ENCODE measurements at regions of chr16 and their contacts with region 1.

Region 1: DNA sequence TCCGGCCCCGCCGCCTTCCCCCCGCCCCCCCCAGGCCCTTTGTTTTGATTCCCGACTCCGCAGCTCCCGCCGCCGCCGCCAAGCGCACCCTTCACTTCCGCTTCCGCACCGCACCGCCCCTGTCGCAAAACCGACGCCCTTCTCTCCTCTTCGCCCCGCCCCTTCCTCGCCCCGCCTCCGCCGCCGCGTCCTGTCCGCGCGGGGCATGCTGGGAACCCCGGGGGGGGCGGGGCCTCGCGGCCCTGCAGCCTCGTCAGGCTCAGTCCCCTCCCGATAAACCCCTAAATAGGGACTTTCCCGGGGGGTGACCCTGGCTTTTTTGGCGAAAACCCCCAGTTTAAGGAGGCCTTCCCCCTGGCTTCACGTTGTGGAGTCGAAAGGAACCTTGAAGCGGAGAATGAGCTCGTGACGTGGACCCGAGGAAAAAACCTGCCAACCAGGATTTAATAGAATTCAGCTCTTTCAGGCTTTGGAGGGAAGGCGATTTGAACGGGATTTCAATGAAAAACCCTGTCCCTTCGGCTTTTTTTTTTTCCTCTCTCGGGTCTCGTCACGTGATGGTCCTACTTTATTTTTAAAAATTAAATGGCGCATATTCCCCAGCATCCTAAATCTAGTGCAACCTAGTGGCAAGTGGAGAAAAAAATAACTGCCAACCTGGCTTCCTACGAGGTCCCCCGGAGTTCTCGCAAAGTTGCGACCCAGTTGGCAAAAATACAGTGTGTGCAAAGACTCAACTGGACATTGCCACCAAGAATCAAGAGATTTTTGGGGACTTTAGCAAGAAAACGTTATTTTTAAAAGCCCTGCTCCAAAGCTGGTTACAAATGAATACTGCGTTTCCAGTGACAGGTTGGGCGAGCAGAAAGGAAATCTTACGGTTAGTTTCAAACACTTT is at the start of gene MARF1:
- DNase-seq: peak; percentile 98 to 100 (median 99)
- ATAC-seq: peak; percentile 96
- H3K4me3 ChIP-seq: peak within 1 kb of the TSS; percentile 100
- H3K4me3 Mint-ChIP-seq: peak within 1 kb of the TSS; percentile 88 to 96 (median 92)
- H3K27ac ChIP-seq: peak within 1 kb of the TSS; percentile 99
- H3K27ac Mint-ChIP-seq: peak within 1 kb of the TSS; percentile 93 to 99 (median 98)
- H3K4me1 ChIP-seq: peaks cover 32 to 48% of the 10 kb centered on the region in 2 donors
- H3K4me1 Mint-ChIP-seq: peaks cover 29 to 58% (median 50%) of the 10 kb centered on the region in 7 donors
- H3K27me3 ChIP-seq: no peaks in the 10 kb centered on the region
- H3K27me3 Mint-ChIP-seq: no peaks in the 10 kb centered on the region
- total RNA-seq, gene MARF1: 93.0 to 259 (median 185) TPM

Region 2: DNA sequence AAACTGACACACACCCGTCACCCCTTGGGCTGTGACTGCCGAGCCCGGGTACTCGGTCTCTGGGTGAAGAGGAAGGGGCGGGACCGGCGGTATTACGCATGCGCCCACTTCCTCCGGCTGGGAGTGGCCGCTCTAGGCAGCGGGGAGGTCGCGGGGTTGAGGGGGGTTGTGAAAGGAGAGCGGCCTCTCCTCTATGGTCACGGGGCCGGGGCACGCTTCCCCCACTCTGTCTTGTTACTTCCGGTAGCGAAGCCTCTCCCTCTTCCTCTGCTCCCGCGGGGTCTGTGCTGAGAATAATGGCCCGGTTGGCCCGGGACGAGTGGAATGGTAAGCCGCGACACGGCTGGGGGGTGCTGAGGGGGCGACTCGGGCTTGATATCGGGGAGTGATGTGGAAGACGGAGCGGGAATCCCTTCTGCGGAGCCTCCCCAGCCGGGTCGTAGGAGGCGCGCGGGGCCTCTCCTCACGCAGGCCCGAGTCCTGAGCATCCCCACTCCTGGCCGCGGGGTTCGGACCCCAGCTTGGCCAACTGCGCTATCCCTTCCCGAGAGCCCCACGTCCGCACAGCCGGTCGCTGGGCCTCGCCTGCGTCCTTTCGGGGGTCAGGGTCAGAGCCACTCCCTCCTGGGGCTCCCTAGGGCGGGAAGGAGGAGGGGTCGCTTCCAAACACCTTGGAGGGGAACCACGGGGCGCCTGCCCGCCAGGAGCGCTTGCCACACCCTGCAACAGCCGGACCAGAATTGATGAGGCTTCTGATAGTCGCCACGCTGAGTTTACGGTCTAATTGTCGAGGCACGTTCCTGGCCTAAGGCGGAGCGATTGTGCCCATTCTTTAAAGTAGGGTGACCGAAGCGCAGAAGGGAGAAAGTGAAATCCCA is 1010.4 kb before region 1 on chr16 and contains the start of gene BFAR:
- CTCF ChIA-PET with region 1: no interaction called
- POLR2A ChIA-PET with region 1: no interaction called
- intact Hi-C with region 1: loop called (anchors 2 to 5 kb)
- DNase-seq: peak; percentile 95 to 99 (median 99)
- ATAC-seq: peak; percentile 85
- H3K4me3 ChIP-seq: peak within 1 kb of the TSS; percentile 89
- H3K4me3 Mint-ChIP-seq: peak within 1 kb of the TSS; percentile 92 to 100 (median 100)
- H3K27ac ChIP-seq: peak within 1 kb of the TSS; percentile 93
- H3K27ac Mint-ChIP-seq: peak within 1 kb of the TSS; percentile 94 to 100 (median 99)
- H3K4me1 ChIP-seq: peaks cover 38 to 45% of the 10 kb centered on the region in 2 donors
- H3K4me1 Mint-ChIP-seq: peaks cover 32 to 76% (median 68%) of the 10 kb centered on the region in 7 donors
- H3K27me3 ChIP-seq: no peaks in the 10 kb centered on the region
- H3K27me3 Mint-ChIP-seq: no peaks in the 10 kb centered on the region
- total RNA-seq, gene BFAR: 43.9 to 82.0 (median 66.0) TPM

Region 3: DNA sequence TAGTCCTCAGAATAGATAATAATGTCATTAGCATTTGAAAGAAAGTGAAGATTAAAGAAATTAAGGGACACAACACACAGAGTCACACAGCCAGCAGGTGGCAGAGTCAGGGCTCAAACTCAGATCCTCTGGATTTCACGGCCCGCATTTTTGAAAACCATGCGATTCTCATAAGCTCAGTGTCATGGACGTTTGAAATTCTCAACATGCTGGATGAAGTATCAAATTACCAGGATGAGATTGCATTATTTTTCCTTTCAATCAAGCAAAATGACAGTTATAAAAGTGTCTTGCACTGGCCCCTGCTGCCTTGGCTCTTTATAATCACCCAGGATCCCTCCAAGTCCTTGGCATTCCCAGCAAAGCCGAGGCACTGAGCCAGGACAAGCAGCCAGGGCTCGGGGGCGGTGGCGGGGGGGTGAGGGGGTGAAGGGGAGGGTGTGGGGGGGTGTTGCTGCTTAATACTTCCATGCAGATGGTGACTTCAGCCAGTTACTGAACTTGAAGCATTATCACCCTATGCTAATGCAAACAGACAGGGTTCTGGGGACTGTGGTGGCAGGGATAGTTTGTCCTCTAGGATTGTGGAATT is 215.6 kb before region 1 on chr16:
- CTCF ChIA-PET with region 1: interaction called, 4 read pairs
- POLR2A ChIA-PET with region 1: interaction called, 5 read pairs
- intact Hi-C with region 1: loop called in 1 of 2 experiments (anchors 1 kb)
- DNase-seq: peak in 7 of 9 donors; percentile 12 to 42 (median 31)
- ATAC-seq: peak; percentile 61
- H3K4me3 ChIP-seq: no peak overlapping the region
- H3K4me3 Mint-ChIP-seq: no peak overlapping the region
- H3K27ac ChIP-seq: no peak overlapping the region
- H3K27ac Mint-ChIP-seq: no peak overlapping the region
- H3K4me1 ChIP-seq: no peaks in the 10 kb centered on the region
- H3K4me1 Mint-ChIP-seq: peaks cover 0 to 2% (median 0%) of the 10 kb centered on the region in 7 donors
- H3K27me3 ChIP-seq: no peaks in the 10 kb centered on the region
- H3K27me3 Mint-ChIP-seq: peaks cover 0 to 7% (median under 1%) of the 10 kb centered on the region in 5 donors

Region 4: GRCh38 chr16:15592324-15592723 is 51.0 kb before region 1 on chr16:
- CTCF ChIA-PET with region 1: interaction called, 3 read pairs
- POLR2A ChIA-PET with region 1: interaction called, 50 read pairs
- intact Hi-C with region 1: loop called (anchors 1 kb)
- DNase-seq: no peak
- ATAC-seq: no peak
- H3K4me3 ChIP-seq: no peak overlapping the region
- H3K4me3 Mint-ChIP-seq: peak overlapping the region in 2 of 10 donors; percentile 20 to 39
- H3K27ac ChIP-seq: peak overlapping the region; percentile 37
- H3K27ac Mint-ChIP-seq: peak overlapping the region; percentile 40 to 98 (median 84)
- H3K4me1 ChIP-seq: peaks cover 20 to 24% of the 10 kb centered on the region in 2 donors
- H3K4me1 Mint-ChIP-seq: peaks cover 13 to 59% (median 27%) of the 10 kb centered on the region in 7 donors
- H3K27me3 ChIP-seq: no peaks in the 10 kb centered on the region
- H3K27me3 Mint-ChIP-seq: no peaks in the 10 kb centered on the region

Region 5: DNA sequence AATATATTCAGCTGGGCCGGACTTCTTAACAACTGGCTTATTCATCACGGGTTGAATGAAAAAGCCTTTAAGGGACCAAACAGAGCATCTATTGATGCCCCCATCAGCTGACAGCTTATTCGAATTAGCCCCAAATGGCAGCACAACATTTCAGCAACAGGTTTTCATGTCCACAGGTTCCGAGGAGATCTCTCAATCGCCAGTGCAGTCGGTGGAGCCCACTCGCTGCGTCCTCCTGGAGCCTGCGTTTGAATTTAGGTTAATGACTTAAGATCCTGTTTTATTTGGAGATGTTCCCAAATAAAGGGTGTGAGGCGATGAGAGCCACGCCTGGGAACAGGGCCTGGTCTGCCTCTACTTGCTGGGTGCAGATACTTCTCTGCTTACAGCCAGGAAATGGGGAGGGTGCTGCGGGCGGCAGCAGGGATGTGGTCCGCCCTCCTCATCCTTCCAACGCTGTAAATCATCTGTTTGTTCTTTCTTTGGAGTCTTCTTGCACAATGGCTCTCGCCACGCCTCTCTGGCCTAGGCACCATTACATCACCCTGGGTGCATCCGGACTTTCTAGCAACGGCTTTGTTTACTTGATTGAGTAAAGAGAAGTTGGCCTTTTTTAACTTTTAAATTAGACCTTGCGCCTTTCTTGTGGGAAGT is 29.3 kb after region 1 on chr16:
- CTCF ChIA-PET with region 1: interaction called, 7 read pairs
- POLR2A ChIA-PET with region 1: interaction called, 54 read pairs
- intact Hi-C with region 1: loop called (anchors 1 kb)
- DNase-seq: peak; percentile 52 to 93 (median 89)
- ATAC-seq: peak; percentile 96
- H3K4me3 ChIP-seq: peak overlapping the region; percentile 32
- H3K4me3 Mint-ChIP-seq: peak overlapping the region; percentile 60 to 86 (median 75)
- H3K27ac ChIP-seq: peak overlapping the region; percentile 86
- H3K27ac Mint-ChIP-seq: peak overlapping the region; percentile 94 to 97 (median 97)
- H3K4me1 ChIP-seq: peaks cover 18 to 27% of the 10 kb centered on the region in 2 donors
- H3K4me1 Mint-ChIP-seq: peaks cover 32 to 57% (median 42%) of the 10 kb centered on the region in 7 donors
- H3K27me3 ChIP-seq: no peaks in the 10 kb centered on the region
- H3K27me3 Mint-ChIP-seq: no peaks in the 10 kb centered on the region

Region 6: GRCh38 chr16:15888072-15888976 is 245.0 kb after region 1 on chr16 and contains the start of gene CEP20:
- CTCF ChIA-PET with region 1: no interaction called
- POLR2A ChIA-PET with region 1: no interaction called
- intact Hi-C with region 1: loop called (anchors 1 to 5 kb)
- DNase-seq: peak; percentile 98 to 100 (median 99)
- ATAC-seq: peak; percentile 100
- H3K4me3 ChIP-seq: peak within 1 kb of the TSS; percentile 95
- H3K4me3 Mint-ChIP-seq: peak within 1 kb of the TSS; percentile 96 to 100 (median 99)
- H3K27ac ChIP-seq: peak within 1 kb of the TSS; percentile 89
- H3K27ac Mint-ChIP-seq: peak within 1 kb of the TSS; percentile 94 to 100 (median 97)
- H3K4me1 ChIP-seq: peaks cover 15 to 17% of the 10 kb centered on the region in 2 donors
- H3K4me1 Mint-ChIP-seq: peaks cover 26 to 47% (median 39%) of the 10 kb centered on the region in 7 donors
- H3K27me3 ChIP-seq: no peaks in the 10 kb centered on the region
- H3K27me3 Mint-ChIP-seq: no peaks in the 10 kb centered on the region
- total RNA-seq, gene CEP20: 15.4 to 34.6 (median 27.8) TPM